K562 (cell line): ENCODE measurements at regions of chr3 and their contacts with region 1.

Region 1: DNA sequence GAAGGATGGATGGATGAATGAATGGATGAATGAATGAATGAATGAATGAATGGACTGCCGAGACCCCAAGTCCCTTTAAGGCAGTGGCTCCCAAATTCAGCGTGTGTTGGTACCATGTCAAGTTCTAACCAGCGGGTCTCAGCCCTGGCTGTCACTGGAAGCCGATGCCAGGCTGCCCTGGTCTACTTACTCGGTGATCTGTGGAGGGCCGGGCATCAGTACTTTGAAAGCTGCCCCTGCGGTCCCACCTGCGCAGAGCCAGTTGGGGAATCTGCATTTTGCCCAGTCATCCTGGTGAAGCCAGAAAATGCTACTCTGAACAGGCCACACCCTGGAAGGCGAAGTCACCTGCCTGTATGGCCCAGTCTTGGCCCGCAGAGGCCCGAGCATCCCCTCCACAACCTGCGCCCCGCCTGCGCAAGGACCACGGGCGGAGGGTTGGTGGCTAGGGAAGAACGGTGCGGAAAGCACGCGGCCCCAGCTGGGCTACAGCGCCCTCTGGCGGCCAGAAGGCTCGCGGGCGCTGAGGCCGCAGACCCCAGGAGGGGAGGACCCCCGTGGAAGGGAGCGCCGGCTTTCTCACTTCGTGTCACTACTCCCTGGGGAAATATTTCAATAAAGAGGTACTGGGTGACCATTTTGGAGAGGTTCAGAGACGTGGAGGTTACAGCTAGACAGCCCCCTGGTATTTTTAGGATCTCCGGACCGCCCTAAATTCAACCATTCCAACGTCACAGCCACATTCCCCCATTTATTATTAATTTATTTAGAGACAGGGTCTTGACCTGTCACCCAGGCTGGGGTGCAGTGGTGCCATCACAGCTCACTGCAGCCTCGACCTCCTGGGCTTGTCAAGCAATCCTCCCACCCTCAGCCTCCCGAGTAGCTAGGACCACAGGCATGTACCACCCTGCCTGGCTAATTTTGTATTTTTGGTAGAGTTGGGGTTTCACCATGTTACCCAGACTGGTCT is 34.9 kb downstream of the PRKCD start:
- DNase-seq: peak; percentile 66 to 76 (median 74)
- ATAC-seq: peak; percentile 87
- H3K4me3 ChIP-seq: no peak overlapping the region
- H3K27ac ChIP-seq: no peak overlapping the region
- H3K4me1 ChIP-seq: peaks cover 9 to 19% of the 10 kb centered on the region in 2 experiments; a peak in 4 of 5 replicates
- H3K27me3 ChIP-seq: no peaks in the 10 kb centered on the region
- CTCF ChIP-seq: peak; percentile 79 to 89 (median 86)
- EP300 ChIP-seq: no peak
- POLR2A ChIP-seq: no peak
- RAD21 ChIP-seq: peak; percentile 78 to 88

Region 2: DNA sequence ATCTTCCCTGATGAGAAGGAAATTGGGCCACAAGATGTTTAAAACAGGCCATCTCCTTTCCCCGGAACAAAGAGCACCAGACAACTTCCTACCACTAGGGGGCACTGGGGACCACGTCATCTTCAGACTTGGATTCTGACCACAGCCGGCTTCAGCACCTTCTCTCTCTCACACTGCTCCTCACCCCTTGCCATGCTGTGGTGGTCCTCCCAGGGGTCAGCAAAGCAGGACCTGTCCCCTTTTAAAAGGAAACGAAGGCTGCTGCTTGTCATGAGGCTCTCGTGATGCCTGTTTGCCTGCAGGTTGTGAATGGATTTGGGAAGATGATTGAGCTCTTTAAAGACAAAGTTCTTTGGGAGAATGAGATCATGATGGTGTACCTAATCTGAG is 81.9 kb before region 1 on chr3:
- CTCF ChIA-PET with region 1: interaction called, 32 read pairs
- POLR2A ChIA-PET with region 1: interaction called, 5 read pairs
- in situ Hi-C with region 1: loop called (anchors 5 kb)
- intact Hi-C with region 1: loop called (anchors 1 kb)
- DNase-seq: peak; percentile 75 to 81 (median 77)
- ATAC-seq: peak; percentile 94
- H3K4me3 ChIP-seq: no peak overlapping the region
- H3K27ac ChIP-seq: no peak overlapping the region
- H3K4me1 ChIP-seq: peaks cover 0 to 16% of the 10 kb centered on the region in 2 experiments; a peak in 3 of 5 replicates
- H3K27me3 ChIP-seq: no peaks in the 10 kb centered on the region
- CTCF ChIP-seq: peak; percentile 82 to 90 (median 83)
- EP300 ChIP-seq: no peak
- POLR2A ChIP-seq: no peak
- RAD21 ChIP-seq: peak; percentile 79 to 85

Region 3: DNA sequence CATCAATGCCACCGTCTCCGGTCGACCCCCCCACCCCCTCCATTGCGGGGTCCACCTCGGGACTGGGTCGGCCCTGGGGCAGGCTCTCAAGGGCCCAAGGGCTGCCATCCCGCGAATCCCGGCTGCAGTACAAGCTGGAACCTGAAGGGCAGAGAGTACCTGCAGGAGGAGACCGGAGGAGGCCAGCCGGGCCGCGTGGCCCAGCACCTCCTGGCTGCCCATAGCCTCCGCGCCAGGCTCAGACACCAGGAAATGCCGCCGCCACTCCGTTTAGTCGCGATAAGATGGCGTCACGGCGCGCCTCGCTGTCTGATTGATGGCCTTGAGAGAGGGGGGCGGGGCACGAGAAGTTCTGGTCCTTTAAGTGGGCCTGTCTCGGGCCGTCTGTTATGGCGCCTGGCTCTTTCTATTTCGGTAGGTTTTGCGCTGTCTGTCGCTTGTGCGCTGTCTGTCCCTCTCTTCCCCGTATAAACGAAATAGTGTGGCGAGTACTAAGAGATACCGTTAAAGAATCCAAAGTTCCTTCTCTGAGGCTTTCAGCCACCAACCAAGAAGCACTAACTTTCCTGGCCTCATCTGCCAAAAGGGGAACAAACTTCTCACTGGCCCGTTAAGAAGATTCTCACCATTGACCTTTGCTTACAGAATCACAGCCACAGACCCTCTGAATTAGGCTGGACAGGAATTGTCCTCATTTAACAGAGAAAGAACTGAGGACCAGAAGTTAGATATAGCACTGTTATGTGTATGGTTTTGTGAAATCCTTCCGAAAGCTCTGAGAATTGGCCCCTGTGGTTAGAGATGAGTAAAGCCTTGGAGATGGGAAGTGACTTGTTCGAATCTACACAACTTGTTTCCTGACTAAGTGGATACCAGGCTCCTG is 65.5 kb before region 1 on chr3 and contains the start of gene RFT1:
- CTCF ChIA-PET with region 1: interaction called, 3 read pairs
- POLR2A ChIA-PET with region 1: no interaction called
- in situ Hi-C with region 1: no loop called
- intact Hi-C with region 1: loop called (anchors 5 kb)
- DNase-seq: peak; percentile 83 to 95 (median 86)
- ATAC-seq: peak; percentile 86
- H3K4me3 ChIP-seq: peak within 1 kb of the TSS; percentile 92
- H3K27ac ChIP-seq: peak within 1 kb of the TSS; percentile 84
- H3K4me1 ChIP-seq: peaks cover 11 to 16% of the 10 kb centered on the region in 2 experiments; a peak in 3 of 5 replicates
- H3K27me3 ChIP-seq: no peaks in the 10 kb centered on the region
- CTCF ChIP-seq: peak in 1 of 3 experiments; percentile 31; a peak in 1 of 6 replicates
- EP300 ChIP-seq: no peak
- POLR2A ChIP-seq: peak; percentile 87
- RAD21 ChIP-seq: no peak
- polyA plus RNA-seq, gene RFT1: 7.4 to 9.0 TPM